Right ventricle myocardium inferior (tissue), 1 donor: ENCODE measurements at regions of chr16 and their contacts with region 1.

Region 1: DNA sequence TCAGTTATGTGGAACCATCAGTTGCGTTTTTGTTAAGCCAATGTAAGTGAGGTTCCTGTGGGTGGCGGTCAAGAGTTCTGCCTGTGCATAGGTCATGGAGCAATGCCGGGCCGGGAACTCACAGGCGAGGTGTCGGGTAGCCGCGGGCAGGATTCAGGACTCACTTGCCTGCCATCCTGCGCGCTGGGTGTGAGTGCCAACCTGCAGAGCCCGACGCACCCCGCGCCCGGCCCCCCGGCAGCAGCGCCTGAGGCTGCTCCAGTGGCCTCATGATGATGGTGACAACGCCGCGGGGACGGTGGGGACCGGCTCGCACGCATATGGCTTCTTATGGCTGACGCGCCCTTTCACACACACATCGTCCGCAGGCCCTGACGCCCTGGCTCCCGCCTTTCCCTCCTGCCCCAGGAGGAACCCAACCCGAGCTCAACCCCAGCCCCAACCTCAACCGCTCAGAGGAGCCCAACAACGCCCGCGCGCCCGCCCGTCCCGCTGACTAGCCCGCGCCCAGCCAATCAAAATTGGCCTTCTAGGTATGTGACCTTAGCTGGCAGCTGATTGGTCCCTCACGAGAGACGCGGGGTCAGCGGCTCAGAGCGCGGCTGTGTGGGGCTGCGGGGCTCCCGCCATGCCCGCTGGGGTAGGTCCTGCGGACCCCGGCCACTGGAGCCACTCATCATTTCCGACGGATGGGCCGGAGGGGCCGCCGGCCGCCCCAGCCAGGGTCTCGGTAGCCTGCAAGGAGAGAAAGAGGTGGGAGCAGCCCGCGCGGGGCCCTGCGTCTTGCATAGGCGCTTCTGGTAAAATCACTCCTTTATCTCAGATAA is at the start of gene C16orf95:
- DNase-seq: peak; percentile 95
- ATAC-seq: peak; percentile 98
- total RNA-seq, gene C16orf95: 4.2 TPM

Region 2: DNA sequence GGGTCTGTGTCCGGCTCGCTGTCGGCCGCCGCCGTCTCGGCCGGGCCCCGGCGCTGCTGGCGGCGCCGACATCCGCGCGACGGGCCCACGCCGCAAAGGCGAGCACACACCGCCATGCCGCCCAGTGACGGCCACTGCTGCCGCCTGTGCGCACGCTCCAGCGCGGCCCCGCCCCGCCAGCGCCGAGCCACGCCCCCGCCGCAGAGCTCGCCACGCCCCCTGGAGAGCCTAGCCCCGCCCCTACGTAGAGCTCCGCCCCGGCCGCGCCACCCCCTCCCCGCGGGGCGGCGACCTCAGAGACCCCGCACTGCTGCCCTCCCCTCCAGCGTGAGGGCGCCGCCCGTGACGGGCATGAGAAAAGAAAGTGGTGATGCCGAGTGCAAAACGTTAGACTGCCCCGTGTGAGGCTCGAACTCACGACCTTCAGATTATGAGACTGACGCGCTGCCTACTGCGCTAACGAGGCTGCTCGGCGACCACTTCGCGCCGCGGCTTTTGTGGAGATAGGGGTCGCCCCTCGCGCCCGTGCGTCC is 66.6 kb after region 1 on chr16 and contains the start of gene FBXO31:
- intact Hi-C with region 1: loop called (anchors 2 kb)
- DNase-seq: peak; percentile 93
- ATAC-seq: peak; percentile 91
- total RNA-seq, gene FBXO31: 70.2 TPM

Region 3: GRCh38 chr16:87391950-87392822 is 75.0 kb after region 1 on chr16 and contains the start of gene MAP1LC3B:
- intact Hi-C with region 1: loop called (anchors 2 kb)
- DNase-seq: peak; percentile 98
- ATAC-seq: peak; percentile 94
- total RNA-seq, gene MAP1LC3B: 125 TPM

Region 4: DNA sequence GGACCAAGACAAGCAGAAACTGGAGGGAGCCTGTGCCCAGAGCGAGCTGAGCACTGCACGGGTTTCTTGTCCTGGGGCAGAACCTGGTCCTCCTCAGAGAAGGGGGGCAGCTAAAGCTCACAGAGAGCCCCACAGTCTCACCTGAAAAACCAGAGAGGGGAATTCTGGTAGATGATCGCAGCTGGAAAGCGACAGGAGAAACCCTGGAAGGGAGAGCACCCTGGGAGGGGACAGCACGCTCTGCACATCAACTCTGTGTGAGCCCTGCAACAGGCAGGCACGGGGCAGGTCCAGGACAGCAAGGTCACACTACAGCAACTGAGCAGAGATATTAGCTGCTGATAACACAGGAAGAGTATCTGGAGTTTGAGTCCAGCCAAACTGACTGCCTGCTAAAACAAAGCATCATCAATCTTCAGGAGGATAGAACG is 157.4 kb after region 1 on chr16:
- intact Hi-C with region 1: no loop called
- DNase-seq: no peak
- ATAC-seq: no peak

Region 5: GRCh38 chr16:87648236-87648635 is 331.1 kb after region 1 on chr16:
- intact Hi-C with region 1: no loop called
- DNase-seq: peak; percentile 48
- ATAC-seq: no peak